ENCODE measurements at regions of chr3 and their contacts with region 1.

Region 1: GRCh38 chr3:184745526-184745925 is 33.7 kb upstream of the MAGEF1 start:
- DNase-seq: no peak
- H3K4me3 ChIP-seq: no peak overlapping the region
- H3K4me3 Mint-ChIP-seq: no peak overlapping the region
- H3K27ac ChIP-seq: no peak overlapping the region
- H3K27ac Mint-ChIP-seq: no peak overlapping the region
- H3K4me1 ChIP-seq: peaks cover 25 to 38% of the 10 kb centered on the region in 2 donors
- H3K4me1 Mint-ChIP-seq: peaks cover 21% of the 10 kb centered on the region
- H3K27me3 ChIP-seq: no peaks in the 10 kb centered on the region
- H3K27me3 Mint-ChIP-seq: peaks cover 3 to 9% (median 6%) of the 10 kb centered on the region in 3 donors
- CTCF ChIP-seq: no peak

Region 2: DNA sequence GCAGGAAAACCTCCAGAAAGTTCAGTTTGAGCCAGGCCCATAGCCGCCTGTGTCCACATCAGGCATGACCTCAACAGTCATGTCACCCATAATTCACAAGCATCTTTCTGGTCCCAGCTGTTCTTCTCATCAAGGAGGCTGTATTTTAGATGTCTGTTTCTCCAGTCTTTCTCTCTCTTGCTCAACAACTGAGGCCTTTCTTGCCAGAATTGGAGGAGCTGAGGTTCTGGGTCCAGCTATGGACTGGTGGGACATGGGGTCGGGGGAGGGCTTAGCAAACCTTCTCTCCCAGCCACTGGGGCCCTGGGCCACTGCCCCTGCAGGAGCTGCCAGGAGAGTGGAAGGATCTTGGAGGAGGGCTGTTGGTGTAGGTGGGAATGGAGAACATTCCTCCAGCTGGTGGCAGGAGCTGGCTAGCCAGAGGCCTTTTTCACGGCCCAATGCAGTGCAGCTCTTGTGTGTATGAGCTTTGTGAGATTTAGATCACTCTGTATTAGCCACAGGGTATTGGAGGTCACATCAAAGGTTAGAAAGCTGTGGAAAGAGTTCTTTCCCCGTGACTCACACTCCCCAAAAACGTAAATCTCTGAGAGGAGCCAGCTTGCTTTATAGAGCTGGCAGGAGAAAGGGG is 57.2 kb before region 1 on chr3:
- intact Hi-C with region 1: no loop called
- DNase-seq: no peak
- H3K4me3 ChIP-seq: no peak overlapping the region
- H3K4me3 Mint-ChIP-seq: no peak overlapping the region
- H3K27ac ChIP-seq: no peak overlapping the region
- H3K27ac Mint-ChIP-seq: peak overlapping the region in 3 of 7 donors; percentile 0 to 45 (median 18)
- H3K4me1 ChIP-seq: peaks cover 54% of the 10 kb centered on the region in 2 donors
- H3K4me1 Mint-ChIP-seq: peaks cover 60% of the 10 kb centered on the region
- H3K27me3 ChIP-seq: no peaks in the 10 kb centered on the region
- H3K27me3 Mint-ChIP-seq: peaks cover 1 to 7% (median 7%) of the 10 kb centered on the region in 3 donors
- CTCF ChIP-seq: no peak

Region 3: GRCh38 chr3:184802150-184802549 is 56.6 kb after region 1 on chr3:
- intact Hi-C with region 1: loop called in 1 of 2 experiments (anchors 2 kb)
- DNase-seq: no peak
- H3K4me3 ChIP-seq: no peak overlapping the region
- H3K4me3 Mint-ChIP-seq: no peak overlapping the region
- H3K27ac ChIP-seq: no peak overlapping the region
- H3K27ac Mint-ChIP-seq: peak overlapping the region in 1 of 7 donors; percentile 66
- H3K4me1 ChIP-seq: peaks cover 39 to 40% of the 10 kb centered on the region in 2 donors
- H3K4me1 Mint-ChIP-seq: peaks cover 33% of the 10 kb centered on the region
- H3K27me3 ChIP-seq: no peaks in the 10 kb centered on the region
- H3K27me3 Mint-ChIP-seq: peaks cover 2 to 8% (median 3%) of the 10 kb centered on the region in 3 donors
- CTCF ChIP-seq: no peak